Natural killer cell (primary cell): ENCODE measurements at regions of chr3 and their contacts with region 1.

Region 1: GRCh38 chr3:18351823-18352744 is 73.1 kb downstream of the SATB1 start:
- DNase-seq: no peak
- ATAC-seq: no peak
- H3K4me3 ChIP-seq: no peak overlapping the region
- H3K4me3 Mint-ChIP-seq: no peak overlapping the region
- H3K27ac ChIP-seq: no peak overlapping the region
- H3K27ac Mint-ChIP-seq: peak overlapping the region; percentile 23 to 66
- H3K4me1 ChIP-seq: no peaks in the 10 kb centered on the region
- H3K4me1 Mint-ChIP-seq: peaks cover 14 to 16% of the 10 kb centered on the region in 2 donors
- H3K27me3 ChIP-seq: no peaks in the 10 kb centered on the region
- H3K27me3 Mint-ChIP-seq: no peaks in the 10 kb centered on the region
- CTCF ChIP-seq: no peak

Region 2: DNA sequence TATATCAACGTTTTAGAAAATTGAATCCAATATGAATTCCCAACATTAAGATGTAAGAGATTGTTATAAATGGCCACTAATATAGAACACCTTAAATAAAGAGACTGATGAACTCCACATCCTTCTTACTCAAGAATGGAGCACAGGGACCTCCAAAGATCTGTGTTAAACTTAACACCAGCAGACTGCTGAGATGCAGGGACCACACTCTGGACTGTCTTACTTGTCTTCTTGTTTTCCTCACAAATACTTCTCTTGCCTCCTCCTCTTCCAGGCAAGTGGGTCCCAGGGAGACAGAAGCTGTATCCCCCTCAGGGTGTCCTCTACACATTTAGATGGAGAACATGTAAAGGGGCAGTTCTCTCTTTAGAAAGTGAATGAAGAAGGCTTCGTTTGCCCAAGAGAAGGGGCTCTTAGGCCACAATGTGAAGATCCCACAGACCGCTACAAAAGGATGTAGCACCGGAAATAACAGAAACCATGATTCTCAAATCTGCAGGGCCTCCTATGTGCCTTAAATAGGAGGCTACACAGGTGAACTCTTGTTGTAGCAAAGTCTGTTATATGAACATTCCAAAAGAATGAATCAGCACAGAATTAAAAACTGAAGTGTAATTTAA is 20.8 kb after region 1 on chr3:
- intact Hi-C with region 1: loop called (anchors 2 kb)
- DNase-seq: peak; percentile 19 to 65
- ATAC-seq: peak; percentile 69 to 92 (median 75)
- H3K4me3 ChIP-seq: no peak overlapping the region
- H3K4me3 Mint-ChIP-seq: peak overlapping the region; percentile 69
- H3K27ac ChIP-seq: no peak overlapping the region
- H3K27ac Mint-ChIP-seq: peak overlapping the region in 1 of 2 donors; percentile 63
- H3K4me1 ChIP-seq: peaks cover 9% of the 10 kb centered on the region
- H3K4me1 Mint-ChIP-seq: peaks cover 62 to 66% of the 10 kb centered on the region in 2 donors
- H3K27me3 ChIP-seq: no peaks in the 10 kb centered on the region
- H3K27me3 Mint-ChIP-seq: no peaks in the 10 kb centered on the region
- CTCF ChIP-seq: no peak

Region 3: GRCh38 chr3:18389108-18389733 is 37.1 kb after region 1 on chr3:
- intact Hi-C with region 1: no loop called
- DNase-seq: peak in 1 of 2 donors; percentile 73
- ATAC-seq: peak in 1 of 3 donors; percentile 21
- H3K4me3 ChIP-seq: no peak overlapping the region
- H3K4me3 Mint-ChIP-seq: no peak overlapping the region
- H3K27ac ChIP-seq: no peak overlapping the region
- H3K27ac Mint-ChIP-seq: peak overlapping the region; percentile 24 to 60
- H3K4me1 ChIP-seq: no peaks in the 10 kb centered on the region
- H3K4me1 Mint-ChIP-seq: peaks cover 17 to 19% of the 10 kb centered on the region in 2 donors
- H3K27me3 ChIP-seq: no peaks in the 10 kb centered on the region
- H3K27me3 Mint-ChIP-seq: no peaks in the 10 kb centered on the region
- CTCF ChIP-seq: peak; percentile 85

Region 4: DNA sequence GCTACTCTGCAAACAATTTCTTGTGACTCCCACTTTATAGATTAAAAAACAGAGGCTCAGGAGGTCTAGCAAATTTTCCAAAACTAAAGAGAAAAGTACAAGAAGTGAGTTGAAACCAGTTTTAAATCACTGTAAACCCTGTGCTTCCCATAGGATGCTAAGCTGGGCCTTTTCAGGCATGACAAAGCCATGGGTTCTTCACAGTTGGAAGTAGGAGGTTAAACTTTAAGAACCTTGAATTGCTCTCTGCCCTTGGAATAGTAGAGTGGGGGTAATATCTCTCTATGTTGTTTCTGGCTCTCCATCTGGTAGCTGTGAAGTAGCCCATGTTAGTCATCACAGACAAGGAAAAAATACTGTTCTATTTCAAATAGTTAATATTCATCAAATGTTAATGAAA is 266.6 kb after region 1 on chr3:
- intact Hi-C with region 1: no loop called
- DNase-seq: no peak
- ATAC-seq: no peak
- H3K4me3 ChIP-seq: no peak overlapping the region
- H3K4me3 Mint-ChIP-seq: no peak overlapping the region
- H3K27ac ChIP-seq: no peak overlapping the region
- H3K27ac Mint-ChIP-seq: no peak overlapping the region
- H3K4me1 ChIP-seq: no peaks in the 10 kb centered on the region
- H3K4me1 Mint-ChIP-seq: peaks cover 0 to 4% of the 10 kb centered on the region in 2 donors
- H3K27me3 ChIP-seq: no peaks in the 10 kb centered on the region
- H3K27me3 Mint-ChIP-seq: no peaks in the 10 kb centered on the region
- CTCF ChIP-seq: no peak